ENCODE measurements at regions of chr11 and their contacts with region 1.

Region 1: GRCh38 chr11:116035977-116036376 is 531.8 kb upstream of the CADM1 start:
- DNase-seq: no peak
- H3K4me3 ChIP-seq: no peak overlapping the region
- H3K27ac ChIP-seq: no peak overlapping the region
- H3K4me1 ChIP-seq: no peaks in the 10 kb centered on the region
- H3K27me3 ChIP-seq: no peaks in the 10 kb centered on the region
- CTCF ChIP-seq: no peak
- EP300 ChIP-seq: no peak
- POLR2A ChIP-seq: no peak

Region 2: GRCh38 chr11:115134926-115135325 is 901.1 kb before region 1 on chr11:
- intact Hi-C with region 1: no loop called
- DNase-seq: no peak
- H3K4me3 ChIP-seq: no peak overlapping the region
- H3K27ac ChIP-seq: no peak overlapping the region
- H3K4me1 ChIP-seq: no peaks in the 10 kb centered on the region
- H3K27me3 ChIP-seq: no peaks in the 10 kb centered on the region
- CTCF ChIP-seq: no peak
- EP300 ChIP-seq: no peak
- POLR2A ChIP-seq: no peak

Region 3: DNA sequence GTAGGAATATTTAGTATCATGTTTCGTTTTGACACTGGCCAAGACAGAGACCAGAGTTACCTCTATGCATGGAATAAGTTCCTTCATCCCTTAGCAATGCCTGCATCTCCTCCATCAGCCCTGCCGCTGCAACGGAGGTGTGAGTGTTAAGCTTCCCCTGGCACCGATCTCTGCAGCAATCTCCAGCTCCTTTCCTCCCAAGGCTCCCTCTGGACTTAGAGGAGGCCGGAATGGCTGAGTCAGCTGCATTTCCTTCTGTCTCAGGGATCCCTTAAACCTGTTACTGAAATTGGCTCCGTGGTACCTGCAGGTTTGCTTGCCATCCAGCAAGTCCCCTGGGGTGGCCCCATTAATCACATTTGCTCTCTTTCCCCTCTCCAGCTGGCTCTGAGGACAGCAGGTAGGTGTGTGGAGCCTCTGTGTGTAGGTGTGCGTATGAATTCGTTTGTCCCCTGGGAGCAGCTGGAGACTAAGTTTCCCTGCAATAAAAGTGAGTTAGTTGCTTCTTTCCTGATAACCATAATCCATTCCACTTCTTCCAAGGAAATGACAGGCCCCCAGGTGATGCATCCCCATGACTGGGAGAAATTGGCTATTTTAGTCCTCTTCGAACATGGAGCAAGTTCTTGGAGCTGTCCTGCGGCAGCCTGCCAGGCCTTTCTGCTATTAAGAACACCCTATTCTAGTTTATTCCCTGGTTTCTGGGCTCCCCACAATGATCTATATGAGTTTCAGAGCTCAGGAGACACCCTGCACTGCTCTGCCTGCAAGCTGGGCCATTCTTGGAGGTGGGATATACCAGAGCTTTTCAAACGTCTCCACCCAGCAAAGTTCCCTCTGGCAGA is 74.6 kb before region 1 on chr11:
- intact Hi-C with region 1: loop called in 1 of 4 experiments (anchors 1 kb)
- DNase-seq: peak in 1 of 5 donors; percentile 56
- H3K4me3 ChIP-seq: no peak overlapping the region
- H3K27ac ChIP-seq: no peak overlapping the region
- H3K4me1 ChIP-seq: peaks cover 5% of the 10 kb centered on the region
- H3K27me3 ChIP-seq: no peaks in the 10 kb centered on the region
- CTCF ChIP-seq: no peak
- EP300 ChIP-seq: no peak
- POLR2A ChIP-seq: no peak

Region 4: GRCh38 chr11:115999437-115999836 is 36.5 kb before region 1 on chr11:
- intact Hi-C with region 1: no loop called
- DNase-seq: no peak
- H3K4me3 ChIP-seq: no peak overlapping the region
- H3K27ac ChIP-seq: no peak overlapping the region
- H3K4me1 ChIP-seq: no peaks in the 10 kb centered on the region
- H3K27me3 ChIP-seq: no peaks in the 10 kb centered on the region
- CTCF ChIP-seq: no peak
- EP300 ChIP-seq: no peak
- POLR2A ChIP-seq: no peak